ENCODE measurements at regions of chr14 and their contacts with region 1.

Region 1: DNA sequence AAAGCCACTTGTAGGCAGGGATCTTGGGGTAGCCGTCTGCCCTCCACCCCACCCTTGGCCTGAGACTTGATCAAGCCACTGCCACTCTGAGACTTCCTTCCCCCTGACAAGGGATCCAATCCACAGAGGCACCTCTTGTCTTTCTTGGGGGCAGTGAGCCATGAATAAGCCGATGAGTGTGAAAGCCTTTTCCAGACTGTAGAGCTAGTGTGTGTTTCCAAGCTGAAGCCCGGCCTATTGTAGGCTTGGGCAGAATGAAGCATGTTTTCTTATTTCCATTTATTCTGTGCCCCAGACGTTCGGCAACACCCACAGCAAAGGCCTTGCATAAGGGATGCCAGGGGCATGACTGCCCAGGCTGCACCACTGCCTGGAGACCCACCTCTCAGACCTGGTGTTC is 991.6 kb downstream of the BCL11B start:
- DNase-seq: no peak
- ATAC-seq: no peak
- H3K4me3 ChIP-seq: no peak overlapping the region
- H3K27ac ChIP-seq: no peak overlapping the region
- H3K4me1 ChIP-seq: no peaks in the 10 kb centered on the region
- H3K27me3 ChIP-seq: peaks cover 0 to 3% (median 0%) of the 10 kb centered on the region in 7 donors
- CTCF ChIP-seq: no peak

Region 2: DNA sequence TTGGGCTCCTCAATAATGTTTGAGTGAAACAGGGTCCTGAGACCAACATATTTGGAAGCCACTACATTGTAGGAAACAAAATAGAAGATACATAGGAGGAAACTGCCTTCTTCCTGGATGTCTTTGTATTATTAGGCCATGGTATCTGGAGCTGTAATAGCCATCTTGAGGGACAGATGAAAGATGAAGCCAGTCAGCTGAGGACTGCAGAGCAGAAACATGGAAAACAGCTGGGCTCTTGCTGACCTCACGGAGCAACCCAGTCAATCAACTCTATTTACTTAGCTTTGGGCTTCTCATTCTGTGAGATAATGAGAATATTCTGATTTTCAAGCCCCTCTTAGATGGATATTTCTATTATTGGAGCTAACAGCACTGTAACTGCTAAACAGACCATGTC is 29.2 kb after region 1 on chr14:
- intact Hi-C with region 1: loop called in 1 of 10 experiments (anchors 1 kb)
- DNase-seq: no peak
- ATAC-seq: no peak
- H3K4me3 ChIP-seq: no peak overlapping the region
- H3K27ac ChIP-seq: no peak overlapping the region
- H3K4me1 ChIP-seq: no peaks in the 10 kb centered on the region
- H3K27me3 ChIP-seq: peaks cover 0 to 5% (median 0%) of the 10 kb centered on the region in 7 donors
- CTCF ChIP-seq: no peak

Measured in heart right ventricle (tissue), 16 donors.